ENCODE measurements at regions of chr10 and their contacts with region 1.

Region 1: DNA sequence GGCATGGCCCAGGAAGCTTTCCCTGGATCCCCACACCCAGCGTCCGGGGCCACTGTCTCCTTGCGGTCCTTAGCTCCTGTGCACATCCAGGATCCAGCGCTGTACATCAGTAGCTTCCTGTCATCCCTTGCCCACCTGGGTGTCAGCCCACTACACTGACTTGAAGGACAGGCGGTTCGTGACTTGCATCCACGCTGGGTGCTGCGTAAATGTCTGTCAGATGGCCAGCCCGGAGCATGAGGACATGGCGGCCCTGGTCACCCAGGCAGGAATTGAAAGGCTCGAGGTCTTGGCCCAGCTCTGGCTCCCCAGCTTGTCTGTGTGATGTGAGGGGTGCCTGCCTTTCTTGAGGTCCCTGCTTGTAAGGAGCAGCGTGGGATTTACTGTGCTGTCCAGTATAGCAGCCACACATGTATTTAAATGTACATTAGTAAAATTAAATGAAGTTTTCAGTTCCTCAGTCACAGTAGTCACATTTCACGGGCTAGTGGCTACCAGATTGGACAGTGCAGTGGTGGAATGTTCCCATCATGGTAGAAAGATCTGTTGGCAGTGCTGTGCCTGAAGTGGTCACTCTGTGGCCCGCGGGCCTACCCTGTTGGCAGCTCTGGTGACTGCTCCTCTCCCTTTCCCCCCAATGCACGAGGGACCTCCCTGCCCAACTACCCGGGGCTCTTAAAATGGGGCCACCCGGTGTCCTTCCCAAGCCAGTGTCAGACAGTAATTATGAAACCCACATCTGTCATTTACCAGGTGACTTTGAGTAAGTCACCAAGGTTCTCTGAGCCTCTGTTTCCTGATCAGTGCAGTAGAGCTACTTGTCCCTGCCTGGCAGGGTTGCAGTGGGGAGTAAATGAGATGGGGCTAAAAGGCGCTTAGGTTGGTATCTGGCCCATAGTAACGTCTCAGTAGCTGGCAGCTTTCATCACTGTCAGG is 97.8 kb upstream of the PPIF start:
- DNase-seq: peak; percentile 25
- H3K4me3 Mint-ChIP-seq: peak overlapping the region; percentile 51
- H3K27ac Mint-ChIP-seq: peak overlapping the region; percentile 91
- H3K4me1 Mint-ChIP-seq: peaks cover 72% of the 10 kb centered on the region
- H3K27me3 Mint-ChIP-seq: no peaks in the 10 kb centered on the region

Region 2: DNA sequence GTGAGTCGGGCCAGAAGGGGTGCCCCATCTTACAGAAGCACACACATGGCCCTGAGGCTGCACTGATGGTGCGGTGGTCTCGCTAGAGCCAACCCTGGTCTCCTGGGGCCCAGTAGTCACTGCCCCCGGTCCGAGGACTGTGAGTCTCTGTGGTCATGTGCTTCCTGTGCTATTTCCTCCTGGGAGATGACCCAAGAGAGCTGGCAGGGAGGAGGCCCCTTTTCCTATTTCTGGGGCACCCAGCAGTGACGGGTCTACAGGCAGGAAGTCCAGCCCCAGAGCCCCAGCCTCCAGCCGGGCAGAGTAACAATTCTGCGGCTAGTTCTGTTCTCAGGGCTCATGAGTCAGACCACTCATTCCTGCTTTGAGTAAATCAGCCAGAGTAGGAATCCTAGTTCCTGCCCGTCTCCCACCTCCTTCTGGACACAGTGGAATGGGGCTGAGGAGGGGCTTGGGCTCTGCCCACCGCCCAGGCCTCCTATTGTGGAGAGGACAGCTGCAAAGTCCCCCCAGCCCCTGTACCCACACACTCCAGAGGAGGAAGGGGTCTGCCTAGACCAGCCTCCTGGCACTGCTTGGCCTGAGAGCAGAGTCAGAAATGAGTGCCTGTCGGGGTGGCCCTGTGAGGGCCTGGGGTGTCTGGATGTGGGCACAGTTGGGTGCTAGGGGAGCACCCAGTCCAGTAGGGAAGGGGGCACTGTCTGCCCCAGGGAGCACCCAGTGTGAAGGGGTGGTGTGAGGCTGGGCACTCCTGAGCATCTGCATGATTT is 17.3 kb after region 1 on chr10:
- intact Hi-C with region 1: loop called (anchors 2 kb)
- DNase-seq: no peak
- H3K4me3 Mint-ChIP-seq: no peak overlapping the region
- H3K27ac Mint-ChIP-seq: peak overlapping the region; percentile 72
- H3K4me1 Mint-ChIP-seq: peaks cover 31% of the 10 kb centered on the region
- H3K27me3 Mint-ChIP-seq: no peaks in the 10 kb centered on the region